CD8-positive, alpha-beta T cell (primary cell): ENCODE measurements at regions of chr10 and their contacts with region 1.

Region 1: GRCh38 chr10:88386821-88387773 is 196.0 kb downstream of the RNLS start:
- DNase-seq: peak in 2 of 9 experiments; percentile 28 to 59
- ATAC-seq: peak; percentile 57
- H3K4me3 ChIP-seq: no peak overlapping the region
- H3K4me3 Mint-ChIP-seq: no peak overlapping the region
- H3K27ac ChIP-seq: peak overlapping the region; percentile 80 to 86
- H3K27ac Mint-ChIP-seq: no peak overlapping the region
- H3K4me1 ChIP-seq: peaks cover 73% of the 10 kb centered on the region
- H3K4me1 Mint-ChIP-seq: peaks cover 34% of the 10 kb centered on the region
- H3K27me3 ChIP-seq: no peaks in the 10 kb centered on the region
- H3K27me3 Mint-ChIP-seq: no peaks in the 10 kb centered on the region
- CTCF ChIP-seq: no peak

Region 2: GRCh38 chr10:87531908-87532622 is 855.0 kb before region 1 on chr10:
- CTCF ChIA-PET with region 1: no interaction called
- POLR2A ChIA-PET with region 1: no interaction called
- intact Hi-C with region 1: loop called in 1 of 2 experiments (anchors 10 kb)
- DNase-seq: no peak
- ATAC-seq: no peak
- H3K4me3 ChIP-seq: no peak overlapping the region
- H3K4me3 Mint-ChIP-seq: no peak overlapping the region
- H3K27ac ChIP-seq: no peak overlapping the region
- H3K27ac Mint-ChIP-seq: no peak overlapping the region
- H3K4me1 ChIP-seq: no peaks in the 10 kb centered on the region
- H3K4me1 Mint-ChIP-seq: peaks cover 17% of the 10 kb centered on the region
- H3K27me3 ChIP-seq: no peaks in the 10 kb centered on the region
- H3K27me3 Mint-ChIP-seq: no peaks in the 10 kb centered on the region
- CTCF ChIP-seq: no peak

Region 3: DNA sequence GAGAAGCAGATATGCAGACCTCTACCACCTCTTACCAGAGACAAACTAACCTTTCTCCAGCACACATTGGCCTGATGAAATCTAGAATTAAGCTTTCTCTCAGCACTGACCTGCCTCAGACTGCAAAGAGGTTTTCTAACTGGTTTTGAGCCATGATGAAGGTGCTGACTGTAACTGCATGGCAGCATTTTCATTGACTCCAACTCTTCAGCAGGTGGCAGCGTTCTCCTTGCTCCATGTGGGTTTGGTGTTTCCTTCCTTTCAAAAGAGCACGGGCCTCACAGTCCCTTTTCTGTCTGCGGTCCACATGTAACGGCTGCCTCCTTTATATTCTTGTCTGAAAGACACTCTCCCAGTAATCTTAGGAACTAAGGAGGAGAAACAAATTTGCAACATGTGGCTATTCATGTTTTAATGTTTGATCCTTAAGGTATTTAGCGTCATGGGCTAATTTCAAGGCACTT is 536.3 kb before region 1 on chr10:
- CTCF ChIA-PET with region 1: interaction called, 26 read pairs
- POLR2A ChIA-PET with region 1: interaction called, 3 read pairs
- intact Hi-C with region 1: loop called in 1 of 2 experiments (anchors 1 kb)
- DNase-seq: peak; percentile 2 to 76 (median 51)
- ATAC-seq: peak; percentile 90
- H3K4me3 ChIP-seq: no peak overlapping the region
- H3K4me3 Mint-ChIP-seq: no peak overlapping the region
- H3K27ac ChIP-seq: no peak overlapping the region
- H3K27ac Mint-ChIP-seq: no peak overlapping the region
- H3K4me1 ChIP-seq: no peaks in the 10 kb centered on the region
- H3K4me1 Mint-ChIP-seq: peaks cover 19% of the 10 kb centered on the region
- H3K27me3 ChIP-seq: no peaks in the 10 kb centered on the region
- H3K27me3 Mint-ChIP-seq: no peaks in the 10 kb centered on the region
- CTCF ChIP-seq: peak; percentile 62

Region 4: GRCh38 chr10:88091490-88092105 is 295.5 kb before region 1 on chr10:
- CTCF ChIA-PET with region 1: interaction called, 9 read pairs
- POLR2A ChIA-PET with region 1: interaction called, 5 read pairs
- intact Hi-C with region 1: loop called (anchors 1 to 10 kb)
- DNase-seq: peak; percentile 46 to 91 (median 67)
- ATAC-seq: peak; percentile 93
- H3K4me3 ChIP-seq: no peak overlapping the region
- H3K4me3 Mint-ChIP-seq: peak overlapping the region; percentile 33
- H3K27ac ChIP-seq: peak overlapping the region; percentile 26 to 76
- H3K27ac Mint-ChIP-seq: peak overlapping the region; percentile 92
- H3K4me1 ChIP-seq: peaks cover 38% of the 10 kb centered on the region
- H3K4me1 Mint-ChIP-seq: peaks cover 43% of the 10 kb centered on the region
- H3K27me3 ChIP-seq: no peaks in the 10 kb centered on the region
- H3K27me3 Mint-ChIP-seq: no peaks in the 10 kb centered on the region
- CTCF ChIP-seq: no peak

Region 5: GRCh38 chr10:88194041-88194887 is 192.8 kb before region 1 on chr10:
- CTCF ChIA-PET with region 1: interaction called, 4 read pairs
- POLR2A ChIA-PET with region 1: no interaction called
- intact Hi-C with region 1: loop called in 1 of 2 experiments (anchors 1 kb)
- DNase-seq: peak; percentile 22 to 83 (median 48)
- ATAC-seq: peak; percentile 96
- H3K4me3 ChIP-seq: no peak overlapping the region
- H3K4me3 Mint-ChIP-seq: peak overlapping the region; percentile 36
- H3K27ac ChIP-seq: peak overlapping the region; percentile 23 to 51
- H3K27ac Mint-ChIP-seq: peak overlapping the region; percentile 89
- H3K4me1 ChIP-seq: peaks cover 35% of the 10 kb centered on the region
- H3K4me1 Mint-ChIP-seq: peaks cover 56% of the 10 kb centered on the region
- H3K27me3 ChIP-seq: no peaks in the 10 kb centered on the region
- H3K27me3 Mint-ChIP-seq: no peaks in the 10 kb centered on the region
- CTCF ChIP-seq: no peak

Region 6: GRCh38 chr10:88346144-88346977 is 40.7 kb before region 1 on chr10:
- CTCF ChIA-PET with region 1: no interaction called
- POLR2A ChIA-PET with region 1: no interaction called
- intact Hi-C with region 1: loop called in 1 of 2 experiments (anchors 5 kb)
- DNase-seq: no peak
- ATAC-seq: no peak
- H3K4me3 ChIP-seq: no peak overlapping the region
- H3K4me3 Mint-ChIP-seq: no peak overlapping the region
- H3K27ac ChIP-seq: no peak overlapping the region
- H3K27ac Mint-ChIP-seq: no peak overlapping the region
- H3K4me1 ChIP-seq: peaks cover 10% of the 10 kb centered on the region
- H3K4me1 Mint-ChIP-seq: peaks cover 5% of the 10 kb centered on the region
- H3K27me3 ChIP-seq: no peaks in the 10 kb centered on the region
- H3K27me3 Mint-ChIP-seq: no peaks in the 10 kb centered on the region
- CTCF ChIP-seq: no peak

Region 7: DNA sequence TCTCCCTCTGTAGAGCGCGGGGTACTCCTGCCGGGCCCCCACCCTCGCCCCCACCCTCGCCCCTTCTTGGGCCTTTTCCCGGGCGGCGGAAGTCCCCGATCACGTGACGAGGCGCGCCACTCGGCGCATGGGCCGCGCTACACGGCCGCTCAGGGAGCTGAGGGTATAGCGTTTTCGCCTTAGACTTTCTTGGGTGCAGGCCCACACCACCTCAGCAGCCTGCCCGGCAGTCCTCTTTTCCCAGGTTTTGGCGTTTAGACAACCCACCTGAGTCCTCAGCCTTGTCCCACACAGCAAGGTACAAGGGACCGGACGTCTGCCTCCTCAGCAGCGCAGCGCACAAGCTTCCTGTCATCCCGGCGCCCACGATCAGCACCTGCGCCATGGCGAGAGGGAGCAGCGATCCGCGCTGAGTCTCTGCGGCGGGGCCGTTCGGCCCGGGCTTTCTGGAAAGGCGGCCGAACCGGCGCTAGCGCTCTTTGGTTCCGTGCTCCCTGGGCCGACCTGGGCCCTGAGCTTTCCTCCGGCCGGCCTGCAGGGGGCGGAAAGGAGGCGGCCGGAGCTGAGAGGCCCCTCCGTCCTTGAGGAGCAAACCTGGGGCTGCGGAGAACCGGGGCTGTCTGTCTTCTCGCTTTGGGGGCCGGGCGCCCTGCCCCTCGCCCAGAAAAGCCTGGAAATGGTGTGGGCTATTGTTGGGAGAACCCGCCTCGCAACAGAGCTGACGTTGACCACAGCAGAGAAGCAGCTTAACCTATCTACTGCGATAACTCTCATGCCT is 195.9 kb after region 1 on chr10 and contains the start of gene RNLS:
- CTCF ChIA-PET with region 1: interaction called, 3 read pairs
- POLR2A ChIA-PET with region 1: no interaction called
- intact Hi-C with region 1: loop called in 1 of 2 experiments (anchors 10 kb)
- DNase-seq: peak; percentile 21 to 84 (median 65)
- ATAC-seq: peak; percentile 83
- H3K4me3 ChIP-seq: peak within 1 kb of the TSS; percentile 83
- H3K4me3 Mint-ChIP-seq: peak within 1 kb of the TSS; percentile 91
- H3K27ac ChIP-seq: peak within 1 kb of the TSS; percentile 72 to 83
- H3K27ac Mint-ChIP-seq: peak within 1 kb of the TSS; percentile 92
- H3K4me1 ChIP-seq: peaks cover 7% of the 10 kb centered on the region
- H3K4me1 Mint-ChIP-seq: peaks cover 11% of the 10 kb centered on the region
- H3K27me3 ChIP-seq: no peaks in the 10 kb centered on the region
- H3K27me3 Mint-ChIP-seq: peaks cover 3% of the 10 kb centered on the region
- CTCF ChIP-seq: peak; percentile 61
- total RNA-seq, gene RNLS: 1.6 to 1.7 TPM